Aorta (tissue), 5 donors: ENCODE measurements at regions of chr3 and their contacts with region 1.

Region 1: DNA sequence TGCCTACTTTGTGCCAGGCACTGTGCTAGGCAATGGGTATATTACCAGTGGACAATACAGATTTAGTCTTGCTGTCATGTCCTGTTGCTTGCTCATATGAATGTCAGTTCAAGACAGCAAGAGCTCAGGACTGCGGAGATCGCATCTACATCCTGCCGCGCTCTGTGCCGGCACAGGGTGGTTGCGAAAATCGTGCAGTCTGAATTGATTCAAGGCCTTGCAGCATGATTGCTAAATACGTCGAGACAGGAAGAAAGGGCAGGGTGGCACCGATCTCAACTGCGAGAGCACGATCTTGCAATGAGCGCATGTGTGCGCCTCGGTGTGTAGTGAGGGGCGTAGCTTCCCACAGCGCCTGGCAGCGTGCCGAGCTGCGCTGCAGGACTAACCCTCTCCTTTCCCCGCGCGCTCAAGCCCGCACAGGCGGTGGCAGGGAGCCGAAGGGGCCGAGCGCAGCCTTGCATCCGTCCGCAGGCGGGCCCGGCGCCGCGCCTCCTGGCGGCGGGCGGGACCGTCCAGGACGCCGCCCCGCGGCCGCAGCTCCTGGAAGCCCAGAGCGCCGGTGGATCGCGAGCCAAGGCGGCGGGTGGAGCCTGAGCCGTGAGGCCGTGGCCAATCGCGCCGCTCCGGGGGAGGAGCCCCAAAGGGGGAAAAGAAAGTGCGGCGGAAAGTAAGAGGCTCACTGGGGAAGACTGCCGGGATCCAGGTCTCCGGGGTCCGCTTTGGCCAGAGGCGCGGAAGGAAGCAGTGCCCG is at the start of gene IL1RAP:
- DNase-seq: peak; percentile 96 to 97
- ATAC-seq: peak; percentile 98
- H3K4me3 ChIP-seq: peak within 1 kb of the TSS; percentile 83
- H3K27ac ChIP-seq: peak within 1 kb of the TSS in 1 of 2 donors; percentile 41
- H3K4me1 ChIP-seq: no peaks in the 10 kb centered on the region
- H3K27me3 ChIP-seq: no peaks in the 10 kb centered on the region
- total RNA-seq, gene IL1RAP: 17.2 to 19.1 TPM

Region 2: GRCh38 chr3:190366145-190366544 is 147.4 kb before region 1 on chr3:
- intact Hi-C with region 1: no loop called
- DNase-seq: no peak
- ATAC-seq: no peak
- H3K4me3 ChIP-seq: no peak overlapping the region
- H3K27ac ChIP-seq: no peak overlapping the region
- H3K4me1 ChIP-seq: no peaks in the 10 kb centered on the region
- H3K27me3 ChIP-seq: no peaks in the 10 kb centered on the region

Region 3: GRCh38 chr3:190533511-190534277 is 20.1 kb after region 1 on chr3:
- intact Hi-C with region 1: loop called in 1 of 2 experiments (anchors 2 kb)
- DNase-seq: peak; percentile 88 to 90
- ATAC-seq: peak; percentile 80
- H3K4me3 ChIP-seq: peak overlapping the region in 1 of 2 donors; percentile 16
- H3K27ac ChIP-seq: no peak overlapping the region
- H3K4me1 ChIP-seq: peaks cover 0 to 2% of the 10 kb centered on the region in 2 donors
- H3K27me3 ChIP-seq: peaks cover 0 to 3% of the 10 kb centered on the region in 2 donors

Region 4: GRCh38 chr3:190552969-190553759 is 39.6 kb after region 1 on chr3:
- intact Hi-C with region 1: no loop called
- DNase-seq: no peak
- ATAC-seq: no peak
- H3K4me3 ChIP-seq: no peak overlapping the region
- H3K27ac ChIP-seq: no peak overlapping the region
- H3K4me1 ChIP-seq: no peaks in the 10 kb centered on the region
- H3K27me3 ChIP-seq: no peaks in the 10 kb centered on the region

Region 5: GRCh38 chr3:190566043-190566933 is 52.7 kb after region 1 on chr3:
- intact Hi-C with region 1: loop called in 1 of 2 experiments (anchors 5 kb)
- DNase-seq: peak; percentile 89 to 95
- ATAC-seq: peak; percentile 85
- H3K4me3 ChIP-seq: no peak overlapping the region
- H3K27ac ChIP-seq: no peak overlapping the region
- H3K4me1 ChIP-seq: peaks cover 0 to 2% of the 10 kb centered on the region in 2 donors
- H3K27me3 ChIP-seq: no peaks in the 10 kb centered on the region

Region 6: DNA sequence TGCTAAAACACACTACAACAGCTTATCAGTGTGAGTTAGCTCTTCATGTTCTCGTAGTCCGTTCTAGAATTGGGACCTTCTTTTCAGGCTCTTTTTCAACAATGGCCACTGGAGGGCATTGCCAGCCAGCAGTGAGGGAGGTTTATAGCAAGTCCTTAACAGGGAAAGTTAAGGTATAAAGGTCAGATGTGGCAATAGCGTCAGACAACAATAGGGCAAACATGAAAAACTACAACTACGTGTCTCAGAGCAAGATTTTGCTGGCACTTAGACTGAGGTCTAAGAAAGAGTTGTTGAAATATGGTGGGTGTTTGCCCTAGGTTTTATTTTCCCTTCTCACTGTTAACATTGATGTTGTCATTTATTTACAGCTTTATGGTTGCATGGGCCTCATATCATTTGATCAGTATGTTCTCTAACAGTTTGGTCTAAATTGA is 187.5 kb after region 1 on chr3:
- intact Hi-C with region 1: loop called in 1 of 2 experiments (anchors 5 kb)
- DNase-seq: no peak
- ATAC-seq: no peak
- H3K4me3 ChIP-seq: no peak overlapping the region
- H3K27ac ChIP-seq: no peak overlapping the region
- H3K4me1 ChIP-seq: no peaks in the 10 kb centered on the region
- H3K27me3 ChIP-seq: no peaks in the 10 kb centered on the region

Region 7: GRCh38 chr3:190767851-190768250 is 254.3 kb after region 1 on chr3:
- intact Hi-C with region 1: no loop called
- DNase-seq: no peak
- ATAC-seq: no peak
- H3K4me3 ChIP-seq: no peak overlapping the region
- H3K27ac ChIP-seq: no peak overlapping the region
- H3K4me1 ChIP-seq: no peaks in the 10 kb centered on the region
- H3K27me3 ChIP-seq: no peaks in the 10 kb centered on the region